PC-3 (cell line): ENCODE measurements at regions of chr2 and their contacts with region 1.

Region 1: DNA sequence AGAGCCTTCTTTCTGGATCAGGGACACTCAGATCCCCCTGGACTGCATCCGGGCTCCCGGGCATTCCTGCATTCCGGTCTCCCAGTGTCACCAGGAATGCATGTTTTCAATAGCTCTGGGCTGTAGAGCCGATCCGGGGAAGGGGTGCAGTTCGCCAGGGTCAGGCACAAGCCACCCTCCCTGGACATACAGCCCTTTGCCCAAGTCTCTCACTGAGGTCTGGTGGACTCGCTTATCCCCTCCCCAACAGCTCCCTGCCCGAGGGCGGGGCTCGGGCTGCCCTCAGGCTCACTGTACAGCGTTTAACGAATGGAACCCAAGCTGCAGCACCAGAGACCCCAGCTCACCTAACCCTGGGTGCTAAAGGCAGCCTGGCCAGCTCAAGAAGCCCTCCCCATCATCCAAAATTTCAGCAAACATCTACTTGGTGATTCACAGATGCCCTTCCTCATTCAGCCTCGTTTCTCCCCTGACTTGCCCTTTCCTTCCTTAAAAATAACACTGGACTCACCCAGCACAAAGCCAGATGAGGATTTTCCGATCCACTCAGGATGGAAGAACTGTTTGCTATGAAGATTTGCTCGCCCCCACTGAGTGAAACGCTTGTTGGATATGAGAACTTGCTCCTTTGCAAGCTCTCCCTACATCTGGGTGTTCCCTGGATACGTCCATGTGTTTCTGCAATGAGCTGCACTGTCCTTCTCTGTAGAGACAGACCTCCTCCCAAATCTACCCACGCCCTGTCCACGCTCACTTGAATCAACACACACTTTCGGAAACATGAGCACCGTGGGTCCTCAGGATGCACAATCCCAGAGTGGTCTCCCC is 58.1 kb downstream of the PXDN start:
- DNase-seq: peak; percentile 91
- ATAC-seq: peak; percentile 58
- H3K4me3 ChIP-seq: 0 out of 2 replicates have a peak overlapping the region, but pooled peaks have one; percentile 3
- H3K27ac ChIP-seq: peak overlapping the region; percentile 98
- H3K4me1 ChIP-seq: peaks cover 36% of the 10 kb centered on the region
- H3K27me3 ChIP-seq: no peaks in the 10 kb centered on the region
- CTCF ChIP-seq: no peak

Region 2: GRCh38 chr2:1132328-1132969 is 553.7 kb before region 1 on chr2:
- CTCF ChIA-PET with region 1: no interaction called
- POLR2A ChIA-PET with region 1: no interaction called
- intact Hi-C with region 1: no loop called
- DNase-seq: no peak
- ATAC-seq: no peak
- H3K4me3 ChIP-seq: no peak overlapping the region
- H3K27ac ChIP-seq: no peak overlapping the region
- H3K4me1 ChIP-seq: no peaks in the 10 kb centered on the region
- H3K27me3 ChIP-seq: peaks cover 26% of the 10 kb centered on the region; the same call in 1 of the 2 replicates
- CTCF ChIP-seq: no peak

Region 3: GRCh38 chr2:1550658-1551316 is 135.4 kb before region 1 on chr2:
- CTCF ChIA-PET with region 1: no interaction called
- POLR2A ChIA-PET with region 1: no interaction called
- intact Hi-C with region 1: no loop called
- DNase-seq: peak; percentile 73
- ATAC-seq: peak; percentile 87
- H3K4me3 ChIP-seq: no peak overlapping the region
- H3K27ac ChIP-seq: no peak overlapping the region
- H3K4me1 ChIP-seq: peaks cover 24% of the 10 kb centered on the region
- H3K27me3 ChIP-seq: no peaks in the 10 kb centered on the region
- CTCF ChIP-seq: peak; percentile 94

Region 4: GRCh38 chr2:1730015-1730927 is 44.1 kb after region 1 on chr2:
- CTCF ChIA-PET with region 1: no interaction called
- POLR2A ChIA-PET with region 1: interaction called, 4 read pairs
- intact Hi-C with region 1: loop called (anchors 1 kb)
- DNase-seq: peak; percentile 92
- ATAC-seq: peak; percentile 68
- H3K4me3 ChIP-seq: peak overlapping the region; percentile 48
- H3K27ac ChIP-seq: peak overlapping the region; percentile 97
- H3K4me1 ChIP-seq: peaks cover 57% of the 10 kb centered on the region
- H3K27me3 ChIP-seq: no peaks in the 10 kb centered on the region
- CTCF ChIP-seq: no peak